Activated CD4-positive, alpha-beta T cell treated with anti-CD3 and anti-CD28 coated beads, Interleukin-2, amount 10 ng/mL, durations not matched to agents 7 days and 5 days (primary cell): ENCODE measurements at regions of chr11 and their contacts with region 1.

Region 1: DNA sequence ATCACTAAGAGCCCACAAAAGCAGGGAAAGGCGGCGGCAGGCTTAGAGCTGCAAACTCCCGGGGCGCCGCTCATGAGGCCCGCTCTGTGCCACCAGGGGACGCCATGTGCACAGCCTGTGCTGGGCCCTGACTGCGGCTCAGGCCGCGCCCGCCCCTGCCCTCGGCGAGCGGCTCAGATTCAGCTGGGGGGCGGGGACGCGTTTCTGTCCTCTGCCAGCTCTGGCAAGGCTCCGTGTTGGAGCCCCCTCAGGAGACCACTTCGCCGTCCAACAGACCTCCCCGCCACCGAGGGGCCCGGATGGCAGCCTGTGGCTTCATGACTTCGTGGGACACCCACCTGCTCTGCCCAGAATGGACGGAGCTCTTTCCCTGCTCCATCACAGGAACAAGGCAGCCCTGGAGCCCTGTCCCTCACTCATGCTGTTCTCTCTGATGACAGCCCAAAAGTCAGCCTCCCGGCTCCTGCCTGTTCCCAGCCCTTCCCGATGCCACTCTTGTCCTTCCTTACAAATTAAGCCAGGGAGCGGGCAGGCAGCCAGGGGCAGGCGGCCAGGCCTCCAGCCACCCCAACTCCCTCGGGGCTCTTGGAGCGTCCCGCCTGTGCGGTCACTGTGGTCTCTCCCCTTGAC is 69.1 kb downstream of the NAT10 start:
- DNase-seq: peak; percentile 81
- H3K4me3 Mint-ChIP-seq: peak overlapping the region; percentile 24
- H3K27ac Mint-ChIP-seq: no peak overlapping the region
- H3K4me1 Mint-ChIP-seq: peaks cover 22% of the 10 kb centered on the region
- H3K27me3 Mint-ChIP-seq: peaks cover 7% of the 10 kb centered on the region

Region 2: DNA sequence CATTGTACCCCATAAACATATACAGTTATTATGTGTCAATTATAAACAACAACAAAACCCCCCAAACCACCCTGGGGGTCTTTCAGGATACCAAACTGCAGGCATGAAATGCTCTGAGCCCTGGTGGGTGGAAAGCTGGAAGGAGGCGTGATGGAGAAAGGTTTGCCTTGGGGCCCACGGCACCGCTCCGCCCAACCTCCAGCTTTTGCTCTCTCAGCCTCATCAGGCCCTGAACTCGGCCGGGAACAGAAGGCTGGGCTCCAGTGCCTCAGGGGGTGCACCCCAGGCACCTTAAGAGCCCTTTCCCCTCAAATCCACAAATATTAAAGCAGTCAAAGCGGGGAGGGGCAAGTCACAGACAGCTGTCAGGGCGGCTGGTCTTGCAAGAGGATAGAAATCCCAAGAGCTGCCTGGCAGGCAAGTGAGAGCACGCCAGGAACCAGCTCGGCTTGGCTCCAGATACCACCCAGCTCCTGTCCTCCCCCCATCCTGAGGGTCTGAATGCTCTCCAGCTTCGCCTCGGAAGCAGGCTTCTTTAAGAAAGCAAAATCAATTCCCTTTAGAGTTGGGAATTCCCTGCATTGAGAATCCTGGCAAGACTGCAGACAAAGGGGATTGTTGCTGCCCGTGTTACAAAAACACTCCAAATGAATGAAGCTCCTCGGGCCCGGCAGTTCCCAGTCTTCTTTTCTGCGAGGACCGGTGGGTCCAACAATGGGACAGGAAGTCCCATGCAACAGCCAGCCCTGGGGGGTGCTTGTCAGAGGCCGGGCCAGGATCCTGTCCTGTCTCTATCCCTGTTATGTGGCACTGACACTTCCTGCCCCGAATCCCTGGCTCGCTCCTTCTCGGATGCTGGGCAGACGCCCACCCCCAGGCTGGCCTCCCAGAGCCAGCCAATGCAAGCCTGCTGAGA is 11.7 kb after region 1 on chr11:
- CTCF ChIA-PET with region 1: interaction called, 77 read pairs
- POLR2A ChIA-PET with region 1: no interaction called
- DNase-seq: no peak
- H3K4me3 Mint-ChIP-seq: no peak overlapping the region
- H3K27ac Mint-ChIP-seq: no peak overlapping the region
- H3K4me1 Mint-ChIP-seq: no peaks in the 10 kb centered on the region
- H3K27me3 Mint-ChIP-seq: peaks cover 8% of the 10 kb centered on the region

Region 3: DNA sequence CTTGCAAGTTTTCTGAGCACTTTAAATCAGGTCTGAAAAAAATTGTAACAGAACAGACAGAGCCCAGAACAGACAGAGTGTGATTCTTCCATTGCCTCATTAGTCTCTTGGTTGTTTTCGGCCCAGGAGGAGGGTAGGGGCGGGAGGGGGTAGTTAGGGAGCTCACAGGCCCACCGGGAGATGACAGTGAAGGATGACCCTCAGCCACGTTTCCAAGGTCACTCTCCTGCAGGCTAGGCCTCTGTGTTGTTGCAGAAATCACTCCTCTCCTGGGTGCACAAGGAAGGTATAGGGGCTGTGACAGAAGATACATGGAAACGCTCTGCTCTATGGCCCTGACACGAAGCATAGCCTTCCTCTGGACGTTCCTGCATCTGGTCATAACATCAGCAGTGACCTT is 114.0 kb after region 1 on chr11:
- CTCF ChIA-PET with region 1: interaction called, 14 read pairs
- POLR2A ChIA-PET with region 1: no interaction called
- DNase-seq: no peak
- H3K4me3 Mint-ChIP-seq: no peak overlapping the region
- H3K27ac Mint-ChIP-seq: no peak overlapping the region
- H3K4me1 Mint-ChIP-seq: no peaks in the 10 kb centered on the region
- H3K27me3 Mint-ChIP-seq: peaks cover 4% of the 10 kb centered on the region

Region 4: DNA sequence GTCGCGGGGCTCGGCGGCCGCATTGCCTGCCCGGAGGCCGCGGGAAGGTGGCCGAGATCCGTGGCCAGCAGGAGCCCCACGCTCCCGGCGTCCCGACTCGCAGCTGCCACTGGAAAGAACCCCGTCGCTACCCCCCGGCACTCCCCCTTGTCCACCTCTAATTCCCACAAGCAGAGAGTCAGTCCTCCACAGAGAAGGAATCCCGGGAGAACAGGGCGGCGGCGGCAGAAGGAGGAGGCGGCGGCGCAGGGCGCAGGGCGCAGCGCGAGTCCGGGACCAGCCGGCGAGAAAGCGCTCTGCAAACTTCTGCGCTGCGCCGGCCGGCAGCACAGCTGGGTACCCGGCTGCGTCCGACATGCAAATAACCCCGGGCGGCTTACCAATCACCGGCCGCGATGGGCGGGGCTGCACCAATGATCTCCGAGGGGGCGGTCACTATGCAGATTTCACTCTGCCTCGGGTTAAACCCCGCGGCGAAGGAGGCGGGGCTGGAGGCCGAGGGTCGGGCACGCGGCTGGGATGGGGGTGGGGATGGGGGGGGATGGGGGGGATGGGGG is 183.3 kb after region 1 on chr11 and contains the start of gene ABTB2:
- CTCF ChIA-PET with region 1: interaction called, 46 read pairs
- POLR2A ChIA-PET with region 1: no interaction called
- DNase-seq: peak; percentile 98
- H3K4me3 Mint-ChIP-seq: peak within 1 kb of the TSS; percentile 80
- H3K27ac Mint-ChIP-seq: peak within 1 kb of the TSS; percentile 82
- H3K4me1 Mint-ChIP-seq: peaks cover 18% of the 10 kb centered on the region
- H3K27me3 Mint-ChIP-seq: peaks cover 49% of the 10 kb centered on the region
- total RNA-seq, gene ABTB2: 0.55 to 0.65 TPM

Region 5: GRCh38 chr11:34364102-34364501 is 189.6 kb after region 1 on chr11:
- CTCF ChIA-PET with region 1: interaction called, 46 read pairs
- POLR2A ChIA-PET with region 1: no interaction called
- DNase-seq: no peak
- H3K4me3 Mint-ChIP-seq: no peak overlapping the region
- H3K27ac Mint-ChIP-seq: no peak overlapping the region
- H3K4me1 Mint-ChIP-seq: peaks cover 9% of the 10 kb centered on the region
- H3K27me3 Mint-ChIP-seq: peaks cover 37% of the 10 kb centered on the region

Region 6: DNA sequence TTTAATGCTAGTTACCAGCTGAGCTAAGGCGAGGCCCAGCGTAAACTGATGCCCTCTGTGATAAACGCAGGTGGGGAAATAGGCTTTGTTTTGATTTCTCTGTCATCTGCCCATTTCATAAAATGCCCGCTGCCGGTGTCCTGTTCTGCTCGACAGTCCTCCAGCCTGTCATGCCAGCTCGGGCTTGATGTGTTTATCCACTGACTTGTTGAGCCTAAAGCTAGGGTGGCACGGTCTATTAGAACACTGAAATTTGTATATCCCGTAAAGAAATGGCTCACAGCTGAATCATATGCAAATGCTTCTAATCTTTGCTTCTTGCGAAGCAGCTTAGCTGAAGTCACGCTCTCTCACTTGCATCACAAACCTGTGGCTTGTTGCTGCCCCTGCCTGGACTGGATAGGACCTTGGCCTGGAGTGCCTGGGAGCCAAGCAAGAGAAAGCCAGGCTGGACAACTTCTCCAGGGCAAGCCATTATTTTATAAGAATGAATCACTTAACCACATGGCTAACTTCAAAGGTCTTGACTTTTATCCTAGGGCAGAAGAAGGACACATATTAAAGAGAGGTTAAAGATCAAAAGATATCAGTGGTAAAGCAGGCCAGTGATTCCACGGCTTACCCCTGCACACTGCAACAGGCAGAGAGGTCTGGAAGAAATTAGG is 479.4 kb after region 1 on chr11:
- CTCF ChIA-PET with region 1: no interaction called
- POLR2A ChIA-PET with region 1: no interaction called
- DNase-seq: no peak
- H3K4me3 Mint-ChIP-seq: no peak overlapping the region
- H3K27ac Mint-ChIP-seq: no peak overlapping the region
- H3K4me1 Mint-ChIP-seq: peaks cover 19% of the 10 kb centered on the region
- H3K27me3 Mint-ChIP-seq: peaks cover 53% of the 10 kb centered on the region